Uterus (tissue), 4 donors: ENCODE measurements at regions of chr17 and their contacts with region 1.

Region 1: DNA sequence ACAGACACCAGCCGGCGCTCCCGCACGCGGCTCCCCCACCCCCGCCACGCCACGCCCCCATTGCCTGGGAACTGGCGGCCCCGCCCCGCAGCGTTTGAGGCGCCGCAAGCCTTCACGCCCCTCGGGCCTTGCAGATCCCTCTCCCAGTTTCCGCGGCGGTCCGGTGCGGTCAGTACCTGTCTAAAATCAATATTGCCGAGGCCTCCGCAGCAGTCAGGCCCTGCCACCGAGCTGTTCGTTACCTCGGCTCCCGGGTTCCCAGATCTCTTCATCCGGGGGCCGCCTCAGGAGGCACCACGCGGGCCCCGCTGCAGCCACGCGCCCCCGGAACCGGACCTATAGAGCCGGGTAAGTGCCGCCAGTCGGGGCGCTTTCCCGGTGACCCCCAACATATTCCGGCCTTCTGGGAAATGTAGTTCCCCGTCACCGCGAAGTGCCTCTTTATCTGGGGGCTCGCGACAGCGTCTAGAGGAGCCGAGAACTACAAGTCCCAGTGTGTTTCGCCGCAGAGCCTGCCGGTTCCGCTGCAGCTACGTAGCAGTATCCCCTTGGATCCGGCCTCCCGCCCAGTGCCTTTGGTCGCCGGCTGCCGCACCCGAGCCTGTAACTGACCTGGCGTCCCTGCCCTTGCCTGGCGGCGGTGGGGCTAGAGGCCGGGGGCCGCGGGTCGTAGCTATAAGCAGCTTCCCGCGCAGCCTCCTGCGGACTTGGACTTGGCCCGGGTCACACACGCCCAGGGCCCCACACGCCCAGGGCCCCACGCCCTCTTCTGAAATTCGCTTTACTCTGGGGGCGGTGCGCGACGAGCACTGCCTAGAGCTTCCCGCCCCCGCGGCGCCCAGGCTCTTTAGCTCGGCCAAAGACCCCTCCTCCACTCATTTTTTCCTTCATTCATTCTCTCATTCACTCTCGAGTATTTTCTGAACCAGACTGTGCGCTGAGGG is at the start of gene PEMT:
- DNase-seq: peak; percentile 93 to 98
- H3K4me3 ChIP-seq: peak within 1 kb of the TSS; percentile 86 to 90
- H3K27ac ChIP-seq: peak within 1 kb of the TSS; percentile 80 to 93
- H3K4me1 ChIP-seq: peaks cover 0 to 16% of the 10 kb centered on the region in 2 donors
- H3K27me3 ChIP-seq: no peaks in the 10 kb centered on the region
- CTCF ChIP-seq: peak in 2 of 4 experiments; percentile 9 to 29
- POLR2A ChIP-seq: peak; percentile 51 to 63
- total RNA-seq, gene PEMT: 26.3 to 61.7 (median 32.2) TPM

Region 2: GRCh38 chr17:17496189-17497064 is 95.2 kb before region 1 on chr17 and contains the start of gene RASD1:
- intact Hi-C with region 1: loop called (anchors 10 kb)
- DNase-seq: peak; percentile 88 to 91
- H3K4me3 ChIP-seq: peak within 1 kb of the TSS; percentile 56 to 61
- H3K27ac ChIP-seq: peak within 1 kb of the TSS; percentile 77 to 86
- H3K4me1 ChIP-seq: peaks cover 0 to 11% of the 10 kb centered on the region in 2 donors
- H3K27me3 ChIP-seq: no peaks in the 10 kb centered on the region
- CTCF ChIP-seq: peak; percentile 77 to 98 (median 97)
- POLR2A ChIP-seq: peak; percentile 98 to 99
- total RNA-seq, gene RASD1: 0.59 to 12.7 (median 7.4) TPM

Region 3: DNA sequence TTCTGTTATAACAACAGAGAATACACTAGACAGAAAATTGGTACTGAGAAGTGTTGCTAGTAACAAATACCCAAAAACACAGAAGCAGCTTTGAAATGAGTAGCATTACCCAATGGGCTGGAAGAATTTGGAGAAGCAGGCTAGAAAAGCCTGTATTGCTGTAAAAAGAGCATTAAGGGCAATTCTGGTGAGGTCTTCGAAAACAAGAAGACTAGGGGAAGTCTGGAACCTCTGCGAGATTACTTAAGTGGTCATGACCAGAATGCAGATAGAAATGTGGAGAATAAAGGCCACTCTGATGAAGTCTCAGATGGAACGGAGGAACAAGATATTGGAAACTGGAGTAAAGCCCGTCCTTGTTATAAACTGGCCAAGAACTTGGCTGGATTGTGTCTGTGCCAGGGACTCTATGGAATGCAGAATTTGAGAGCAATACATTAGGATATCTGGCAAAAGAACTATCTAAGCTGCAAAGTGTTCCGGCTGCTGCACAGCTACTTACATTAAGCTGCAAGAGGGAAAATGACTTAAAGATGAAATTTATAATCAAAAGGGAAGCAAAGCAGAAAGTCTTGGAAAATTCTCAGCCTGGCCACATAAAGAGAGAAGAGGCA is 44.8 kb after region 1 on chr17:
- intact Hi-C with region 1: no loop called
- DNase-seq: no peak
- H3K4me3 ChIP-seq: no peak overlapping the region
- H3K27ac ChIP-seq: no peak overlapping the region
- H3K4me1 ChIP-seq: no peaks in the 10 kb centered on the region
- H3K27me3 ChIP-seq: no peaks in the 10 kb centered on the region
- CTCF ChIP-seq: no peak
- POLR2A ChIP-seq: no peak

Region 4: GRCh38 chr17:17648762-17649161 is 57.1 kb after region 1 on chr17:
- intact Hi-C with region 1: no loop called
- DNase-seq: no peak
- H3K4me3 ChIP-seq: no peak overlapping the region
- H3K27ac ChIP-seq: no peak overlapping the region
- H3K4me1 ChIP-seq: no peaks in the 10 kb centered on the region
- H3K27me3 ChIP-seq: no peaks in the 10 kb centered on the region
- CTCF ChIP-seq: no peak
- POLR2A ChIP-seq: no peak

Region 5: GRCh38 chr17:17839791-17840707 is 248.4 kb after region 1 on chr17:
- intact Hi-C with region 1: no loop called
- DNase-seq: peak; percentile 82 to 89
- H3K4me3 ChIP-seq: peak overlapping the region; percentile 37 to 42
- H3K27ac ChIP-seq: peak overlapping the region; percentile 97 to 99
- H3K4me1 ChIP-seq: peaks cover 17 to 38% of the 10 kb centered on the region in 2 donors
- H3K27me3 ChIP-seq: no peaks in the 10 kb centered on the region
- CTCF ChIP-seq: no peak
- POLR2A ChIP-seq: peak; percentile 65 to 96